Uterus (tissue), 4 donors: ENCODE measurements at regions of chr12 and their contacts with region 1.

Region 1: DNA sequence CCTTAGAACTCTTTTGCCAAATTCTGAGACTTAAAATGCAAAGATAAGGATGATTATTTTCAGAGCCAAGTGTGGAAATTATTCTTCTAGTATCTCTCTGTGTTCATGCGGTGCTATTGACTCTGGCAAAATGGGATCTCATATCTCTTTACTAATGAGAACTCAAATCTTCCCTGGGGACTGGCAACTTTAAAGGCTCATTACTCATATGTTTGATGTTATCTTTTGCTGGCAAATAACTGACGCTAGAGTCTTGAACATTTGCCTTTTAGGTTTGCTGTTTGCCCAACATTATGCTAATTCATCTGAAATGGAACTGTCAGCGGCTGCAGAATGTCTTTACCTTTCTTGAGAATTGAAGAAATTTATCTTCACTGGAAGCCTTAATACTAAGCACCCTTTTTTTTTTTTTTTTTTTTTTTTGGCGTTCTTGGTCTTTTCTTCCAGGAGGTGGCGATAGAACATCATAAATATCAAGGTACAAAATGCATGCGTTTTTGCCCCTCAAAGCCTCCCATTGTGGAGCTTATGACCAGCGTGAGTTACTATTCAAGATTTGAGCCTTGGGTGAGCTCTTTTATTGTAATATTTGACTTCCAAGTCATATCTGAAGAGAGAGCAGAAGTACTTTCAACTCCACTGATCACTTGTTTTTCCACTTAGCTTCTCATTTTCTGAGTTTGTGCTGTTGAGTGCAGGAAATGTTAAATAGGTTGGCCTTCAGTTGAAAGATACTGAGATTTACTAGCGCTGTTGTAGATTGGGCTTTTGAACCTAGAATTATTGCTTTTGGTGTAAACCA is 86.6 kb downstream of the CAND1 start:
- DNase-seq: peak in 1 of 2 donors; percentile 25
- H3K4me3 ChIP-seq: no peak overlapping the region
- H3K27ac ChIP-seq: peak overlapping the region; percentile 13 to 44
- H3K4me1 ChIP-seq: peaks cover 0 to 7% of the 10 kb centered on the region in 2 donors
- H3K27me3 ChIP-seq: no peaks in the 10 kb centered on the region
- CTCF ChIP-seq: peak in 3 of 4 experiments; percentile 45 to 53 (median 48)
- POLR2A ChIP-seq: no peak

Region 2: GRCh38 chr12:67943226-67943892 is 587.6 kb after region 1 on chr12:
- intact Hi-C with region 1: loop called (anchors 10 kb)
- DNase-seq: peak; percentile 37 to 77
- H3K4me3 ChIP-seq: no peak overlapping the region
- H3K27ac ChIP-seq: peak overlapping the region in 1 of 2 donors; percentile 27
- H3K4me1 ChIP-seq: peaks cover 3% of the 10 kb centered on the region in 2 donors
- H3K27me3 ChIP-seq: no peaks in the 10 kb centered on the region
- CTCF ChIP-seq: peak; percentile 68 to 84 (median 76)
- POLR2A ChIP-seq: no peak